ENCODE measurements at regions of chr5 and their contacts with region 1.

Region 1: DNA sequence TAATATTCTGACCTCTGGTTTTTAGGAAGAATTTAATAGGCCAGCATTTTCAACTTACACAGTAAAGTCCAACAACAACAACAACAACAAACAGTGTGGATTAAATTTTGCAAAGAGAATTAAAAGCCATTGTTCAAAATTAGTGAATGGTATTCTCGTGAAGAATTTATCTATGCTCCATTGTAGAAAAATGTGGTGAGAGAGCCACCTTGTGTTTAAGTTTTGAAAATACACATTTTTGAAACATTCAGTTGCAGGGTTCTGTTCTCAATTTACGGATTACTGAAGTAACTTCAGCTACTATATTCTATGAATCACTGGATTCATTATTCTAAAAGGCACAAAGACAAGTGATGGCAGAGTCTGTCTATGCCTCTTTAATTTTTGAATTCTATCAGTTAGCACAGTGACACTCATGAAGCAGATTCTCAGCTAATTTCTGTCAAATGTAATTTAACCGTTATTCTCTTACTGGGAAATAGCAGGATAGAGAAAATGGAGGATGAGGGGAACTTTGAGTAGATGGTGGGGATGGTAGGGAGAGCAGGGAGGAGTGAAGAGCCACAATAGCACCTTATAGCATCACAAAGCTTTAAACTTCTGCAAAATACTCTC is 11.0 kb downstream of the CCDC152 start:
- DNase-seq: no peak
- H3K4me3 ChIP-seq: no peak overlapping the region
- H3K27ac ChIP-seq: no peak overlapping the region
- H3K4me1 ChIP-seq: no peaks in the 10 kb centered on the region
- H3K27me3 ChIP-seq: no peaks in the 10 kb centered on the region
- CTCF ChIP-seq: peak in 3 of 6 experiments; percentile 57 to 72 (median 69)
- POLR2A ChIP-seq: no peak

Region 2: DNA sequence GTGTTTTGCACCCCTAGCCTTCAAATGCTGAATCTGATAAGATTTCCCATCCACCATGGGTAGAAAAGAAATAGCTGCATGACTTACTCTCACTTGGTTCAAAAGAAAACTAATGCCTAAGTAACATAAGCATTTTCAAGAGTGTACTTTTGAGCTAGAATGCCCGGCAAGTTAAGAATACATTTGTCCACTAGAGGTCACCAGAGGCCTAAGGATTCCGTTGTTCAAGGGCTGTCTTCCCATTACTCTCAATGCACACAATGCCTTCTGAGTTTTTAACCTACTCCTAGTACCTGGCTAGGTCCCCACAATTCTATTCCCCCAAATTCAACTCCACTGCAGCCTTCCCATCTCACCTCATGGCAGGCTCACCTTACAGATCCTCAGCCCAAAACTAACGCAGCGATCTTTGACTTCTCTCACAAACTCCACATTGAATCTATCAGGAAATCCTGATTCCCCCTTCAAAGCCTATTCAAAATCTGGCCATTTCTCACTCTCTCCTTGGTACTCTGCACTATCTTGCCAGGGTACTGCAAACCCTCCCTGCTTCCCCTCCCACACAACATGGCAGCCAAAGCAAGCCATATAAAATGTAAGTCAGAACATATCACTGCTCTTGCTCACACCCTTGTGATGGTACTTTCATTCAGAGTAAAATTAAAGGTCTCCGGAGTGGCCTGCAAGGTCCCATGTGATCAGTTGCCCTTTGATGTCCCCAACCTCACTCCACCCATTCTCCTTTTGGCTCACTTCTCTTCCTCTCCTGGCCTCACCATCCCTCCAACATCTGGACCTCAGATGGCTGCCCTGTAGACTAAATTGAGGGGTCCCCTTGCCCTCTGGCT is 910.7 kb before region 1 on chr5:
- intact Hi-C with region 1: loop called (anchors 5 kb)
- DNase-seq: peak; percentile 35 to 44
- H3K4me3 ChIP-seq: no peak overlapping the region
- H3K27ac ChIP-seq: no peak overlapping the region
- H3K4me1 ChIP-seq: no peaks in the 10 kb centered on the region
- H3K27me3 ChIP-seq: no peaks in the 10 kb centered on the region
- CTCF ChIP-seq: peak; percentile 28 to 87 (median 67)
- POLR2A ChIP-seq: no peak

Region 3: GRCh38 chr5:42005561-42006153 is 761.9 kb before region 1 on chr5:
- intact Hi-C with region 1: loop called (anchors 10 kb)
- DNase-seq: no peak
- H3K4me3 ChIP-seq: no peak overlapping the region
- H3K27ac ChIP-seq: no peak overlapping the region
- H3K4me1 ChIP-seq: no peaks in the 10 kb centered on the region
- H3K27me3 ChIP-seq: no peaks in the 10 kb centered on the region
- CTCF ChIP-seq: peak in 4 of 6 experiments; percentile 53 to 67 (median 62)
- POLR2A ChIP-seq: no peak

Region 4: GRCh38 chr5:42423285-42424165 is 344.1 kb before region 1 on chr5 and contains the start of gene GHR:
- intact Hi-C with region 1: loop called (anchors 10 kb)
- DNase-seq: peak; percentile 85 to 88
- H3K4me3 ChIP-seq: peak within 1 kb of the TSS; percentile 42 to 63 (median 52)
- H3K27ac ChIP-seq: peak within 1 kb of the TSS; percentile 52 to 71 (median 70)
- H3K4me1 ChIP-seq: peaks cover 0 to 17% of the 10 kb centered on the region in 2 donors
- H3K27me3 ChIP-seq: no peaks in the 10 kb centered on the region
- CTCF ChIP-seq: peak; percentile 65 to 87 (median 80)
- POLR2A ChIP-seq: peak in 1 of 2 donors; percentile 39
- total RNA-seq, gene GHR: 10.9 to 14.9 (median 14.2) TPM

Measured in thyroid gland (tissue), 4 donors.